PC-9 (cell line): ENCODE measurements at regions of chr11 and their contacts with region 1.

Region 1: DNA sequence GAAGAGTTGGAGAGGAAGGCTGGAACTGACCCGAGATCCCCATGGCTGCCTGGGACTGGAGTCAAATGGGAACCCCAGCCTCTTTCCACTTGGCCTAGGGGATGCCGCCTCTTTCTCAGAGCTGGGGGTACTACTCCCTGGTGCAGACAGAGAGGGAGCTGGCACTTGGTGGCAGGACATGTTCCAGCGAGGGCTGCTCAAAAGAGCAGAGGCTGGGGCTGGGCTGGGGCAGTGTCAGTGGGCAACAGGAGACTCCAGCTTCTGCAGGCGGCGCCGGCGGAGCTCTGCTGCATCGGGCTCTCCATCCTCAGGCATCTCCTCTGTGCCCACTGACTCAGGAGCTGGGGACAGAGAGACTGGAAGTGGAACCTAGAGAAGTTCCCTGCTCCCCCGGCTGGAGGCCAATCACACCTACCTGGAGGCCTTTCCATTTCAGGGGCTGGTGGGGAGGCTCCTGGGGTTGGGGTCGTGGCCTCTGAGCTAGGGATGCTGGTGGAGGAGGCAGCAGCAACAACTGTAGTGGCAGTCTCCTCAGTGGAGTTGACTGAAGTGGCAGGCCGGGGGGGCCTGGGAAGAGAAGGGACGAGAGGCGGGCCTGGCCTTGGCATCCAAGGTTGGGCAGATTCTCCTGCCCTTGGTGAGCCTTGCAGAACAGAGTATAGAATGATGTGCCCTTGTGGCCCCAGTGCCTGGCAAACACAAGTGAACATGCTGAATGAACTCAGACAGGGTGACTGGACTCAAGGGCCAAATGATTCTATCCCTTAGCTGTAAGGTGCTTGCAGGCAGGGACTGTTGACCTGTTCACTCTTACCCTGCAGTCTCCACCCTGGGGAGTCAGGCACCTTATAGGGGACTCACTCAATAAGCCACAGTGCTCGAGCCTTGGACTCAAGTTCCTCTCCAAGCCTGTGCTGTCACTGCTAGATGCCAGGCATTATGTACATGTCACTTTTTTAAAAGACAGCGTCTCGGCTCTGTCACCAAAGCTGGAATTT is 5.9 kb downstream of the SYVN1 start:
- DNase-seq: no peak
- H3K4me3 ChIP-seq: no peak overlapping the region
- H3K27ac ChIP-seq: no peak overlapping the region
- H3K4me1 ChIP-seq: peaks cover 18% of the 10 kb centered on the region
- H3K27me3 ChIP-seq: no peaks in the 10 kb centered on the region
- CTCF ChIP-seq: no peak

Region 2: DNA sequence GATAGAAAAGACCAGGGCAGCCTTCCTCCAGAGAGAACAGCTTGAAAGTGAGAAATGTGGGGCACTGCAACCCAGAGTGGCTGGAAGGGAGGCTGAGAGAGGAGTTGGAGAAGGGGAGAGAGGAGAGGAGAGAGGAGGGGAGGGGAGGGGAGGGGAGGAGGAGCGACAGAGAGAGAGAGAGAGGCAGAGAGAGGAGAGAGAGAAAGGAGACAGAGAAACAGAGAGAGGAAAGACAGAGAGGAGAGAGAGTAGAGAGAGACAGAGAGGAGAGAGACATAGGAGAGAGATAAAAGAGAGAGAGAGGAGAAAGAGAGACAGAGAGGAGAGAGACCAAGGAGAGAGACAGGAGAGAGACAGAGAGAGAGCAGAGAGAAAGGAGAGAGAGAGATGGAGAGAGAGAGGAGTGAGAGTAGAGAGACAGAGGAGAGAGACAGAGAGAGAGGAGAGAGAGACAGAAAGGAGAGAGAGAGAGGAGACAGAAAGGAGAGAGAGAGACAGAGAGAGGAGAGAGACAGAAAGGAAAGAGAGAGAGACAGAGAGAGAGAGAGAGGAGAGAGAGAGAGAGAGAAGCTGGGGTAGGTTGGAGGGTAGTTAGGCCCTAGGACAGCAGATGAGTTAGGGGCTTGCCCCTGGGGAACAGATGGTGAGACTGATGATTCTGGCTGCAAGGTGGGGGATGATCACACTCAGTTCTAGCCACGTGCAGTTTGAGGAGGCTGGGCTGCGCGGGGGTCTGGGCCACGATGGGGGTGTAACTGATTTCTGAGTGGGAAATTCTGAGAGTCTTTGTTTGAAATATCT is 387.9 kb after region 1 on chr11:
- CTCF ChIA-PET with region 1: no interaction called
- POLR2A ChIA-PET with region 1: interaction called, 11 read pairs
- intact Hi-C with region 1: no loop called
- DNase-seq: no peak
- H3K4me3 ChIP-seq: no peak overlapping the region
- H3K27ac ChIP-seq: no peak overlapping the region
- H3K4me1 ChIP-seq: no peaks in the 10 kb centered on the region
- H3K27me3 ChIP-seq: no peaks in the 10 kb centered on the region
- CTCF ChIP-seq: no peak; the same call in 1 of the 2 replicates